Sciatic nerve (tissue), 2 donors: ENCODE measurements at regions of chr4 and their contacts with region 1.

Region 1: GRCh38 chr4:62528874-62529273 is 1328.7 kb downstream of the ADGRL3 start:
- DNase-seq: no peak
- ATAC-seq: no peak

Region 2: GRCh38 chr4:62560858-62561257 is 32.0 kb after region 1 on chr4:
- intact Hi-C with region 1: loop called (anchors 1 kb)
- DNase-seq: no peak
- ATAC-seq: no peak